ENCODE measurements at regions of chr3 and their contacts with region 1.

Region 1: GRCh38 chr3:111859974-111860859 is 1.2 kb downstream of the PHLDB2 start:
- DNase-seq: peak; percentile 82
- H3K4me3 ChIP-seq: peak overlapping the region; percentile 86 to 91 (median 86)
- H3K27ac ChIP-seq: peak overlapping the region; percentile 97
- H3K4me1 ChIP-seq: peaks cover 38% of the 10 kb centered on the region
- H3K27me3 ChIP-seq: no peaks in the 10 kb centered on the region
- CTCF ChIP-seq: peak; percentile 34 to 61

Region 2: GRCh38 chr3:111087924-111088469 is 772.2 kb before region 1 on chr3:
- CTCF ChIA-PET with region 1: no interaction called
- dilution Hi-C with region 1: no loop called
- in situ Hi-C with region 1: no loop called
- intact Hi-C with region 1: no loop called
- DNase-seq: no peak
- H3K4me3 ChIP-seq: no peak overlapping the region
- H3K27ac ChIP-seq: no peak overlapping the region
- H3K4me1 ChIP-seq: no peaks in the 10 kb centered on the region
- H3K27me3 ChIP-seq: no peaks in the 10 kb centered on the region
- CTCF ChIP-seq: no peak

Region 3: DNA sequence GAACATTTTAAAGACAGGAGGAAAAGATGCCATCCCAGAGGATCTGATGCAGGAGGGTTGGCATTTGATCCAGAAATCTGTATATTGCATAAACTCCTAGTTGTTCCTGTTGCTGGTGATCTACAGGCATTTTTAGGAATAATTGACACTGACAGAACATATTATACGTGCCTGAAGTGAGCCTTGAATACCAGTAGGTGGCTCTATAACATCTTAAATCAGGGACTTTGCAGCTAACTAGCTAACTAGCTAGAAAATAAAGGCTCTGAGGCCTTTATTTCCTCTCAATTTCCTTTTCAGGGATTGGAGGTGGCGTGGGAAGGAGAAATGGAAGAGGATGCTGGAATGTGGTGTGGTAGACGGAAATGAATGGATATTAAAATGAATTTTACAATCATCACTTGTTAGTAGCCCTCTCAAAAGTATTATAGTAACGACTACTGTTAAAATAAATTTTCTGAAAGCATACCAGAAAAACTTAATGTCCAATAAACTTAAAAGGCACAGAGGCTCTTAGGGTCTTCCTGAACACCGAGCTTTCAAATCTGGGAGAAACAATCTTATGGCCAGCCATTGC is 191.2 kb before region 1 on chr3:
- CTCF ChIA-PET with region 1: interaction called, 4 read pairs
- dilution Hi-C with region 1: no loop called
- in situ Hi-C with region 1: no loop called
- intact Hi-C with region 1: loop called (anchors 1 kb)
- DNase-seq: peak; percentile 48
- H3K4me3 ChIP-seq: no peak overlapping the region
- H3K27ac ChIP-seq: no peak overlapping the region
- H3K4me1 ChIP-seq: peaks cover 49% of the 10 kb centered on the region
- H3K27me3 ChIP-seq: no peaks in the 10 kb centered on the region
- CTCF ChIP-seq: peak; percentile 76 to 85

Region 4: GRCh38 chr3:111730143-111730542 is 130.1 kb before region 1 on chr3:
- CTCF ChIA-PET with region 1: interaction called, 4 read pairs
- dilution Hi-C with region 1: no loop called
- in situ Hi-C with region 1: no loop called
- intact Hi-C with region 1: loop called (anchors 1 kb)
- DNase-seq: peak; percentile 85
- H3K4me3 ChIP-seq: no peak overlapping the region
- H3K27ac ChIP-seq: peak overlapping the region; percentile 93
- H3K4me1 ChIP-seq: peaks cover 45% of the 10 kb centered on the region
- H3K27me3 ChIP-seq: no peaks in the 10 kb centered on the region
- CTCF ChIP-seq: no peak

Region 5: DNA sequence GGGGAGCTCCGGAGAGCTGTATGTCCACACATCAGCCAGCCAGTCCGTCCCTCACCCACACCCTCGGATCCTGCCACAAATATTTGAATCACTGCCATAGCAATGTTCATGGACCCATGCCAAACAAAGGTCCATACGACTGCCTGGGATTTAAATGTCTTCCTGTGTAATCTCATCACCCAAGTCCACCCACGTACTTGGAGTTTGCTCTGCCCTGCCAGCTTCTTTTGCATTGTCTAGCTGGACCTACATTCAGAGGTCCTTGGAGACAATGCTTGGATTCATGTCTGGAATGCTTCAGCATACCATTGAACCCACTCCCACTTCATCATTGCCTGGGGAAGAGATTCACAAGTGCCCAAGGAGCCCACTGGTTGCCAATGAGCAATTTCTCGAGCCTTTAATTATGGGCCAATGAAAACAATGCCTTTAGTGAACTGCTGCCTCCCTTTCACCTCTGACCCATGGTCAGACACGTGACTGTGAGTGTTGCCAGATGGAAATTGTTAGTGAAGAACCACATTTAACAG is 91.6 kb before region 1 on chr3:
- CTCF ChIA-PET with region 1: no interaction called
- dilution Hi-C with region 1: no loop called
- in situ Hi-C with region 1: no loop called
- intact Hi-C with region 1: loop called (anchors 1 kb)
- DNase-seq: peak; percentile 99
- H3K4me3 ChIP-seq: no peak overlapping the region
- H3K27ac ChIP-seq: peak overlapping the region; percentile 94
- H3K4me1 ChIP-seq: peaks cover 41% of the 10 kb centered on the region
- H3K27me3 ChIP-seq: no peaks in the 10 kb centered on the region
- CTCF ChIP-seq: no peak

Region 6: DNA sequence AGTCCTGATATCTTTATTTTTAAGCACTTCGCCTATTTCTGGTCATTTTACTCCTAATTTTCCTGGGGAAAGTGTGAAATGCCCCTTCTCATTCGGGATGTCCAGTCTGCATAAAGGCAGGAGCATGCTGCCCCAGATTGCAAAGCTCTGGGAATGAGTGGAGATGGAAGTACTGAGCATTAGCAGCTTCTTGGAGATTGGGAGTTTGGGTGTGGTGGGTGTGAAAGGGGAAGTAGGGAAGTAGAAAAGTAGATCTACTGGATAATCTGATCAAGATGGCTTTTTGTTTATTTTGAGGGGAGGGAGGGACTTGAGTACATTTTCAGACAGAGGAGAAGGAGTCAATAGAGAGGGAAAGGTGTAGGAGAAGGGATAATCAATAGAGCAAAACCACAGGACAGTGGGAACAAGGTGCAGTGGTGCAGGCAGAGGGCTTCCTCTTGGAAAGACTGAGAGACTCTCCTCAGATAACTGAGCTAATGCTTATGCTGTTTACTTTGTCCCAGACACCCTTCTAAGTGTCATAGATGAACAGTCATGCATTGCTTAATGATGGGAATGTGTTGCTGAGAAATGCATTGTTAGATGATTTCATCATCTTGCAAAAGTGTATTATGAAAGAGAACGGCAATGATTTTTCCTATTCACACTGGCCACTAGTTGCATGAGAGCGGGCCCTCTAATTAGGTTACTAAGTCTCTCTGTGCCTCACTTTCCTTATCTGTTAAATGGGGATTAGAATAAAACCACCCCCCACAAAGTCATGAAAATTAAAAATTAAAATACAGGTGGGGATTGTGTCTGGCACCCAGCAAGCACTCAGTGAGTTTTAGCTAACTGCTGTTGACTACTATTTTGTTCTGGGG is 44.4 kb after region 1 on chr3:
- CTCF ChIA-PET with region 1: no interaction called
- dilution Hi-C with region 1: no loop called
- in situ Hi-C with region 1: no loop called
- intact Hi-C with region 1: loop called (anchors 2 kb)
- DNase-seq: peak; percentile 89
- H3K4me3 ChIP-seq: no peak overlapping the region
- H3K27ac ChIP-seq: peak overlapping the region; percentile 85
- H3K4me1 ChIP-seq: peaks cover 37% of the 10 kb centered on the region
- H3K27me3 ChIP-seq: no peaks in the 10 kb centered on the region
- CTCF ChIP-seq: peak; percentile 26 to 51

Region 7: GRCh38 chr3:111967651-111968274 is 107.5 kb after region 1 on chr3:
- CTCF ChIA-PET with region 1: no interaction called
- dilution Hi-C with region 1: loop called (anchors 5 kb)
- in situ Hi-C with region 1: no loop called
- intact Hi-C with region 1: loop called (anchors 1 kb)
- DNase-seq: peak; percentile 58
- H3K4me3 ChIP-seq: no peak overlapping the region
- H3K27ac ChIP-seq: no peak overlapping the region
- H3K4me1 ChIP-seq: peaks cover 16% of the 10 kb centered on the region
- H3K27me3 ChIP-seq: no peaks in the 10 kb centered on the region
- CTCF ChIP-seq: peak; percentile 85 to 86

Region 8: DNA sequence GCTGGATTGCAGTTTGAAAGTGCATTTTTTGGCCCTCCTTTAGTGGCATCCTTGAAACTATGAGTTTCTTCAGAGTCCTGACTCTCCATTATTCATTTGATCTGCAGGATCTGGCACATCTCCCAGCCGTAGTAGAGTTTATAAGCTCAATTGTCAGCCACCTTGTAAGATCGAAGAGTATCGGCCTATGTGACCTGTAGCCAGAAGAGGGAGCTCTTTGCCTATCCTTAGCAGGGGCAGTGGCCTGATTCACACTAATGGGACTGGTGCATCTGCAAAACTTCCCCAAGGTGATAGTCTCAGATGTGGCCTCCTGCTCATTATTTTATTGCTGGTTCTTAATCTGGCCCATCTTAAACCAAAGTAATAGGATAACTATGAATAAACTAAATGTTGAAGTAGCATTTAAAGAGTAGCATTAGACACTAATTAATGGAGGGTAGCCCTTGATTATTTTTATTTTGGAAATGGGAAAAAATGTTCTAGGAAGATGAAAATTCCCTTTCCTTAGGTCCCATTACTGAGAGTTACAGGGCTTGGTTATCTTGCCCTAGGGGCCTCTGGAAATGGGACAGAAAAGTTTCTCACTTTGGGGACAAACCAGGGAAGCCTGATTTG is 251.7 kb after region 1 on chr3:
- CTCF ChIA-PET with region 1: no interaction called
- dilution Hi-C with region 1: no loop called
- in situ Hi-C with region 1: no loop called
- intact Hi-C with region 1: no loop called
- DNase-seq: peak; percentile 71
- H3K4me3 ChIP-seq: no peak overlapping the region
- H3K27ac ChIP-seq: no peak overlapping the region
- H3K4me1 ChIP-seq: no peaks in the 10 kb centered on the region
- H3K27me3 ChIP-seq: no peaks in the 10 kb centered on the region
- CTCF ChIP-seq: peak; percentile 88

Region 9: GRCh38 chr3:112721231-112721630 is 861.0 kb after region 1 on chr3:
- CTCF ChIA-PET with region 1: no interaction called
- dilution Hi-C with region 1: no loop called
- in situ Hi-C with region 1: no loop called
- intact Hi-C with region 1: no loop called
- DNase-seq: no peak
- H3K4me3 ChIP-seq: no peak overlapping the region
- H3K27ac ChIP-seq: no peak overlapping the region
- H3K4me1 ChIP-seq: peaks cover 12% of the 10 kb centered on the region
- H3K27me3 ChIP-seq: no peaks in the 10 kb centered on the region
- CTCF ChIP-seq: no peak